Activated CD4-positive, alpha-beta T cell treated with anti-CD3 and anti-CD28 coated beads for 36 hours (primary cell): ENCODE measurements at regions of chr5 and their contacts with region 1.

Region 1: GRCh38 chr5:122019919-122020590 is 58.0 kb downstream of the LOX start:
- DNase-seq: no peak
- ATAC-seq: peak; percentile 95
- H3K4me3 Mint-ChIP-seq: peak overlapping the region; percentile 20
- H3K27ac Mint-ChIP-seq: peak overlapping the region; percentile 73
- H3K4me1 Mint-ChIP-seq: peaks cover 10% of the 10 kb centered on the region
- H3K27me3 Mint-ChIP-seq: no peaks in the 10 kb centered on the region

Region 2: DNA sequence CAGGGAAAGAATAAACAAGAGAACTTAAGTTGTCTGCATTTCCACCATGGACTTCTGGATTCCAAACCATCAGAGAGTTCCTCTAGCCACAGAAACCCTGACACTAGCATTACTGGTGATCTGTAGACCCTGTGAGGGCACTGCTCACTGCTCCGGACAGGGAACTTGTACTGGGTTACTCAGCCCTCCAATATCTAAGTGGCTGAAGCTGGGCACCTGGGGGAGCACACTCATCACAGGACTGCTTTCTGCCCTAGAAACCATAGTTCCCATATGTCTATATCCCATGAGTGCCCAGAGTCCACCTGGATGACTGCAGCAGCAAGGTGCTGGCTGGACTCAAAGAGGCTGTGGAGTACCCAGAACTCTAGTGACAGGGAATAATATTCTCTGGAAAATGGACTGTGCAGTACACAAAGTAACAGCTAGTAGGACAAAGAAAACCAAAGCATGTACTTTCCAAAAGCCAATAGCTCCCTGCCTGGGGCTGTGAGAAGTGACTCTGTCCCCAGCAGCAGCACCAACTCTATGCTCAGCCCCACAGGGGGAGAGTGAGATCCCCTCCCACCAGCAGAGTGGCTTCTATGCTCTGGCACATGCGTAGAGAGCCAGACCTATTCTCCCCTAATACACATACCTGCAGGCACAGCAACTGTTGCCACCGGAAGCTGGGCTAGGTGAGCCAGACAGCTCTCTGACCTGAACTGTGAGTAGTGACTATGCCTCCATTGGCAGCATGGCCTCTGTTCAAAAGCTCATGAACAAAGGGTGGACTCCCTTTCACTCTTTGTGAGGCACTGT is 641.3 kb before region 1 on chr5:
- CTCF ChIA-PET with region 1: no interaction called
- POLR2A ChIA-PET with region 1: no interaction called
- intact Hi-C with region 1: no loop called
- DNase-seq: no peak
- ATAC-seq: no peak
- H3K4me3 Mint-ChIP-seq: no peak overlapping the region
- H3K27ac Mint-ChIP-seq: no peak overlapping the region
- H3K4me1 Mint-ChIP-seq: no peaks in the 10 kb centered on the region
- H3K27me3 Mint-ChIP-seq: no peaks in the 10 kb centered on the region

Region 3: GRCh38 chr5:121976979-121977378 is 43.1 kb before region 1 on chr5:
- CTCF ChIA-PET with region 1: interaction called, 3 read pairs
- POLR2A ChIA-PET with region 1: no interaction called
- intact Hi-C with region 1: loop called in 1 of 2 experiments (anchors 5 kb)
- DNase-seq: no peak
- ATAC-seq: no peak
- H3K4me3 Mint-ChIP-seq: no peak overlapping the region
- H3K27ac Mint-ChIP-seq: no peak overlapping the region
- H3K4me1 Mint-ChIP-seq: peaks cover 33% of the 10 kb centered on the region
- H3K27me3 Mint-ChIP-seq: no peaks in the 10 kb centered on the region

Region 4: DNA sequence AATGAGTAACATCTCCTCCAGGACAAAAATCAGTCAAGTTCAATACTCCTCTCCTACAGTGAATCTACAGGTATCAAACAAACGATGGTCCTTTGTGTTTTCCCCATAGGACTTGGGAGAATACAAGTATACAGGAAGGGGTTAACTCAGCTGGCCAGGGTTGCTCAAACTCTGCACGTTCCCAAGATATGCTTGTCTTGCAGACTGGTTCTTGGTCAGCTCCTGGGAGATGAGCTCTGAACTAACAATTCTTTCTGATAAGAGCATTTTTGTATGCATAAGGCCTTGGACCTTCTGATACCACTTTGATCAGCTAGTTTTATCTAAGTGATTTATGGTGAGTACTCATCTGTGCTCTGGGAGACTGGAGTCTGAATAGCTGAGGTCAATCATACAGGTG is 15.9 kb after region 1 on chr5:
- CTCF ChIA-PET with region 1: no interaction called
- POLR2A ChIA-PET with region 1: interaction called, 21 read pairs
- intact Hi-C with region 1: no loop called
- DNase-seq: no peak
- ATAC-seq: no peak
- H3K4me3 Mint-ChIP-seq: no peak overlapping the region
- H3K27ac Mint-ChIP-seq: no peak overlapping the region
- H3K4me1 Mint-ChIP-seq: no peaks in the 10 kb centered on the region
- H3K27me3 Mint-ChIP-seq: no peaks in the 10 kb centered on the region

Region 5: GRCh38 chr5:122756263-122756911 is 736.3 kb after region 1 on chr5:
- CTCF ChIA-PET with region 1: no interaction called
- POLR2A ChIA-PET with region 1: no interaction called
- intact Hi-C with region 1: loop called in 1 of 2 experiments (anchors 10 kb)
- DNase-seq: peak; percentile 16
- ATAC-seq: peak; percentile 92
- H3K4me3 Mint-ChIP-seq: no peak overlapping the region
- H3K27ac Mint-ChIP-seq: peak overlapping the region; percentile 76
- H3K4me1 Mint-ChIP-seq: peaks cover 14% of the 10 kb centered on the region
- H3K27me3 Mint-ChIP-seq: peaks cover 8% of the 10 kb centered on the region